Naive thymus-derived CD4-positive, alpha-beta T cell (primary cell): ENCODE measurements at regions of chr13 and their contacts with region 1.

Region 1: DNA sequence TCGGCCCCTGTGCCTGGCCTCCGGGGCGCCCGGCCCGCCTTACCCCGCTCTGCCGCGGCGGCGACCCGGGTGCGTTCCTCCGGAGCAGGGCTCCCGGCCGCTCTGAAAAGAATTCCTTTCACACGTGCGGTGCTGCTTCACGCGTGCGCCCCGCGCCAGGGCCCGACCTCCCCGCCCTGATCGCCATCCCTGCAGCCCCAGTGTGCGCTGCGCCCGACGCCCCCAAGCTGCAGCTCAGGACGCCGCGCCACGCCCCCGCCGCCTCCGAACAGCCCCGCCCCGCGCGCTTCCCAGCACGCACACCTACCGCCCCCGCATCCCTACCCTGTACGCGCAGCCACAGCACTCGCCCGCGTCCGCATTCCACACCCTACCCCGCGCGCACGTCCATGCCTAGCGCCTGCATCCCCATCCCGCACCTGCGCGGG is at the start of gene GJA3:
- DNase-seq: peak in 8 of 9 donors; percentile 30 to 61 (median 44)
- ATAC-seq: peak; percentile 68
- H3K4me3 ChIP-seq: peak within 1 kb of the TSS; percentile 43
- H3K4me3 Mint-ChIP-seq: peak within 1 kb of the TSS; percentile 78 to 90 (median 86)
- H3K27ac ChIP-seq: no peak within 1 kb of the TSS
- H3K27ac Mint-ChIP-seq: peak within 1 kb of the TSS in 3 of 9 donors; percentile 51 to 72 (median 55)
- H3K4me1 ChIP-seq: peaks cover 5 to 6% of the 10 kb centered on the region in 2 donors
- H3K4me1 Mint-ChIP-seq: peaks cover 0 to 22% (median 13%) of the 10 kb centered on the region in 7 donors
- H3K27me3 ChIP-seq: peaks cover 0 to 29% of the 10 kb centered on the region in 2 donors
- H3K27me3 Mint-ChIP-seq: peaks cover 21 to 73% (median 46%) of the 10 kb centered on the region in 5 donors
- total RNA-seq, gene GJA3: 0.05 to 0.17 (median 0.08) TPM in 3 of 5 experiments, not detected in the others

Region 2: GRCh38 chr13:19927117-19927748 is 233.6 kb before region 1 on chr13:
- CTCF ChIA-PET with region 1: interaction called, 5 read pairs
- POLR2A ChIA-PET with region 1: interaction called, 4 read pairs
- intact Hi-C with region 1: loop called (anchors 1 kb)
- DNase-seq: peak in 6 of 9 donors; percentile 5 to 31 (median 24)
- ATAC-seq: peak; percentile 54
- H3K4me3 ChIP-seq: no peak overlapping the region
- H3K4me3 Mint-ChIP-seq: no peak overlapping the region
- H3K27ac ChIP-seq: no peak overlapping the region
- H3K27ac Mint-ChIP-seq: no peak overlapping the region
- H3K4me1 ChIP-seq: no peaks in the 10 kb centered on the region
- H3K4me1 Mint-ChIP-seq: peaks cover 0 to 5% (median 0%) of the 10 kb centered on the region in 7 donors
- H3K27me3 ChIP-seq: no peaks in the 10 kb centered on the region
- H3K27me3 Mint-ChIP-seq: no peaks in the 10 kb centered on the region

Region 3: DNA sequence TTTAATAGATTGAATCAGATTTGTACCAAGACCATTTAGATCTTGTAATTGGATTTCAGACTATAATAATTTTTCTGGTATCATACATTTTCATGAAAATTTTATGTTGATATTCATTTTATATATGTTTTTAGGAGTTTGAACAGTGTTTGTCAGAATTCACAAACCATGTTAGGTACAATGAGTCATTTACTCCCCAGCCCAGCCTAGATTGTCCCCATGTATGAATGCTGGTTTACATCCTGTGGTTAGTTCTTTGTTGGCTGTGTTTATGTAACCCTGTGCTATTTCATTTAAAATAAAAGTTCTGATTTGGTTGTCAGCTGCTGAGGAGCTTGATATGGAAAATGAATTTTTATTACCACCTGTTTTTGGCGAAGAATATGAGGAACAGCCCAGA is 96.7 kb before region 1 on chr13:
- CTCF ChIA-PET with region 1: no interaction called
- POLR2A ChIA-PET with region 1: no interaction called
- intact Hi-C with region 1: loop called in 1 of 2 experiments (anchors 10 kb)
- DNase-seq: no peak
- ATAC-seq: no peak
- H3K4me3 ChIP-seq: no peak overlapping the region
- H3K4me3 Mint-ChIP-seq: no peak overlapping the region
- H3K27ac ChIP-seq: no peak overlapping the region
- H3K27ac Mint-ChIP-seq: no peak overlapping the region
- H3K4me1 ChIP-seq: no peaks in the 10 kb centered on the region
- H3K4me1 Mint-ChIP-seq: no peaks in the 10 kb centered on the region
- H3K27me3 ChIP-seq: no peaks in the 10 kb centered on the region
- H3K27me3 Mint-ChIP-seq: no peaks in the 10 kb centered on the region

Region 4: DNA sequence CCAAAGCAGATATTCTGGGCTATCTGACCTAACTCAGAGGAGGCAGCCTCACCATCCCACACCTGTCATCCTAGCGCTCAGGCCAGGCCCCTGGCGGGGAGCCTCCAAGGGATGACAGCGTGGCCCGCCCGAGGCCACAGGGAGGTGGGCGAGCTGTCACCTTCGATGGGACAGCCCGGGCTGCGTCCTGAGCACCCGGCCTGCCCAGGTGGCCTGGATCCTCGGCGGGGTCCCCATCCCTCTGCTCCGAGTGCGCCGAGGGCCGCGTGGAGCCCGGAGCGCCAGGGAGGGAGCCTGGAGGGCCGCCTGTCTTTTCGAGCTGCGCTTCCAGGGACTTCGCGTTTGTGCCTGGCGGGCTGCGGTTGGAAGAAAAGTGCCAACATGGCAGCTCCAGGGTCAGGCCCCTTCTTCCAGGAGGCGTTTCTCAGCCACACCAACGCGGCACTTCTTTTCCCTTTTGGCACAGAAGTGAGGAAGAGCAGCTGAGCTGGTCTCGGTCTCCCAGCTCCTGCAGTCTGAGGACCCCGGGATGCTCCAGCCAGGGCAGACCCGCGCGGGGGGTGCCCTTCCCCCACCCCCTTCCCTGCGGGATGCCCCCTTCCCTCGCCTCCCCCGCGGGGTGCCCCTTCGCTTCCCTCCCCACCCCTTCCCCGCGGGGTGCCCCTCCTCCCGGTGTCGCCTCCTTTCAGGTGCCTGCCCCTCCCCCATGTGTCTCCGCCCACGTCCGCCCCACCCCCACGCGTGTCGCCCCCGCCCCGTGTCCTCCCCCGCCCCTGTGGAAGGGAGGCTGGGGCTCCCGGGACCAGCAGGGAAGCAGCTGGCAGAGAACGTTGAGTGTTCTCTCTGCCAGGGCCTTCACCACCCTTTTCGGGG is 42.4 kb before region 1 on chr13:
- CTCF ChIA-PET with region 1: no interaction called
- POLR2A ChIA-PET with region 1: interaction called, 10 read pairs
- intact Hi-C with region 1: loop called in 1 of 2 experiments (anchors 2 kb)
- DNase-seq: peak in 7 of 9 donors; percentile 8 to 45 (median 27)
- ATAC-seq: peak; percentile 54
- H3K4me3 ChIP-seq: peak overlapping the region; percentile 71
- H3K4me3 Mint-ChIP-seq: peak overlapping the region; percentile 83 to 96 (median 93)
- H3K27ac ChIP-seq: peak overlapping the region; percentile 67
- H3K27ac Mint-ChIP-seq: peak overlapping the region; percentile 53 to 97 (median 93)
- H3K4me1 ChIP-seq: peaks cover 0 to 9% of the 10 kb centered on the region in 2 donors
- H3K4me1 Mint-ChIP-seq: peaks cover 9 to 25% (median 20%) of the 10 kb centered on the region in 7 donors
- H3K27me3 ChIP-seq: no peaks in the 10 kb centered on the region
- H3K27me3 Mint-ChIP-seq: peaks cover 0 to 20% (median 0%) of the 10 kb centered on the region in 5 donors